Heart left ventricle (tissue), 16 donors: ENCODE measurements at regions of chr17 and their contacts with region 1.

Region 1: GRCh38 chr17:61904094-61904710 is 23.6 kb downstream of the INTS2 start:
- DNase-seq: no peak
- ATAC-seq: no peak
- H3K4me3 ChIP-seq: no peak overlapping the region
- H3K27ac ChIP-seq: no peak overlapping the region
- H3K4me1 ChIP-seq: no peaks in the 10 kb centered on the region
- H3K27me3 ChIP-seq: no peaks in the 10 kb centered on the region
- CTCF ChIP-seq: no peak
- POLR2A ChIP-seq: no peak

Region 2: GRCh38 chr17:61947367-61948078 is 43.3 kb after region 1 on chr17:
- intact Hi-C with region 1: loop called in 1 of 10 experiments (anchors 2 kb)
- DNase-seq: no peak
- ATAC-seq: no peak
- H3K4me3 ChIP-seq: no peak overlapping the region
- H3K27ac ChIP-seq: no peak overlapping the region
- H3K4me1 ChIP-seq: no peaks in the 10 kb centered on the region
- H3K27me3 ChIP-seq: no peaks in the 10 kb centered on the region
- CTCF ChIP-seq: no peak
- POLR2A ChIP-seq: no peak